ENCODE measurements at regions of chr3 and their contacts with region 1.

Region 1: DNA sequence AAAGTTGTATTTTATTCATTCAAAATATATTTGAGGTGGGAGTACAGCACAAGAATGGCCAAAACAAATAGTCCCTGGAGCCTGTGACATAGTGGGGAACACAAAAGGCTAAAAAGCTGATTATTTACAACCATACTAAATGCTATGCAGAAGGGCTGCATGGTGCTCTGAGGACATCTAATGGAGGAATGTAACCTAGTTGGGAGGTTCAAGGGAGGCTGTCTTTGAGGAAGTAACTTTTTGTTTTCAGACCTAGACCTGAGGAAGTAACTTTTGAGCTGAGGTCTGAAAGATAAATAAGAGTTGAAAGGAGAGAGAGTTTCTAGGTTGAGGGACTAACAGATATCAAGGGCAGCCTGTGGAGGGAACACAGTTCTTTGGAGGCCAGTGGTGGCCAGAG is 34.8 kb upstream of the RASA2 start:
- DNase-seq: no peak
- ATAC-seq: peak in 3 of 4 donors; percentile 41 to 69 (median 53)
- H3K4me3 ChIP-seq: no peak overlapping the region
- H3K27ac ChIP-seq: no peak overlapping the region
- H3K4me1 ChIP-seq: no peaks in the 10 kb centered on the region
- H3K27me3 ChIP-seq: no peaks in the 10 kb centered on the region
- CTCF ChIP-seq: peak; percentile 56

Region 2: DNA sequence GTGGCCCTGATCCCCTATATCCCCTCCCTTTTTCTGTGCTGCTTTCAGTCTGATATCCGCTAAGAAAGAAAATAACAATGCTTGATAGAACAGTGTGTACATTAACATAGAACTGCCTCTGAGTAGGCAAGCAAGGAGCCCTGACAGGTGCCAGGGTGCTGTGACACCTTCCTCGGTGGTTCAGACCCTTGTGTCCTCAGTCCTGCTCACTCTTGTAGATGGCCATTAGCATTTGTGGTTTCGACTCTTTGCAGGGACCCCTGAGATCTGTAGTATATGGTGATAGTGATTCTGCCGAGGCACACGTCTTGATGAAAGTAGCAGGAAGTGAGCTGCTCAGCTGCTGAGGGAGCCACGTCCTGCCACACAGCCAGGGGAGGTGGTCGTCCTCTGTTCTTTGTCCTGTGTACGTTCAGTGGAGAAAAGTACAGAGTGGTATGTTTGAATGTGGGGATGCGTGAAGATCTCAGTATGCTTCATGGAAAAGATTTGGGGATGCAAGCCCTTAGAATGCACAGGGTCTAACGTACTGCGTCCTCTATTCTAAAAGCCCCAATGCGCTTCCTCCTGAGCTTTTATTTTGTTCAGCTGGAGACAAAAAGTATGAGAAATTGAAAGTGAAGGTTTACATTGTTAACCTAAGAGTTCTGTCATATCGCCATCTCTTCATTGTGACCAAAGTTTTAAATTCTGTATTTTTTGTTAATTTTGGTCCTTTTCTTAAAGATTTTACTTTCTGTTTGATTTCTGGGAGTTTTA is 185.1 kb before region 1 on chr3:
- intact Hi-C with region 1: no loop called
- DNase-seq: no peak
- ATAC-seq: no peak
- H3K4me3 ChIP-seq: peak overlapping the region; percentile 18
- H3K27ac ChIP-seq: no peak overlapping the region
- H3K4me1 ChIP-seq: peaks cover 2% of the 10 kb centered on the region
- H3K27me3 ChIP-seq: no peaks in the 10 kb centered on the region
- CTCF ChIP-seq: no peak

Region 3: GRCh38 chr3:141303481-141304223 is 148.4 kb before region 1 on chr3:
- intact Hi-C with region 1: loop called in 1 of 2 experiments (anchors 2 kb)
- DNase-seq: no peak
- ATAC-seq: peak; percentile 71 to 90 (median 76)
- H3K4me3 ChIP-seq: no peak overlapping the region
- H3K27ac ChIP-seq: no peak overlapping the region
- H3K4me1 ChIP-seq: no peaks in the 10 kb centered on the region
- H3K27me3 ChIP-seq: no peaks in the 10 kb centered on the region
- CTCF ChIP-seq: peak; percentile 81

Region 4: DNA sequence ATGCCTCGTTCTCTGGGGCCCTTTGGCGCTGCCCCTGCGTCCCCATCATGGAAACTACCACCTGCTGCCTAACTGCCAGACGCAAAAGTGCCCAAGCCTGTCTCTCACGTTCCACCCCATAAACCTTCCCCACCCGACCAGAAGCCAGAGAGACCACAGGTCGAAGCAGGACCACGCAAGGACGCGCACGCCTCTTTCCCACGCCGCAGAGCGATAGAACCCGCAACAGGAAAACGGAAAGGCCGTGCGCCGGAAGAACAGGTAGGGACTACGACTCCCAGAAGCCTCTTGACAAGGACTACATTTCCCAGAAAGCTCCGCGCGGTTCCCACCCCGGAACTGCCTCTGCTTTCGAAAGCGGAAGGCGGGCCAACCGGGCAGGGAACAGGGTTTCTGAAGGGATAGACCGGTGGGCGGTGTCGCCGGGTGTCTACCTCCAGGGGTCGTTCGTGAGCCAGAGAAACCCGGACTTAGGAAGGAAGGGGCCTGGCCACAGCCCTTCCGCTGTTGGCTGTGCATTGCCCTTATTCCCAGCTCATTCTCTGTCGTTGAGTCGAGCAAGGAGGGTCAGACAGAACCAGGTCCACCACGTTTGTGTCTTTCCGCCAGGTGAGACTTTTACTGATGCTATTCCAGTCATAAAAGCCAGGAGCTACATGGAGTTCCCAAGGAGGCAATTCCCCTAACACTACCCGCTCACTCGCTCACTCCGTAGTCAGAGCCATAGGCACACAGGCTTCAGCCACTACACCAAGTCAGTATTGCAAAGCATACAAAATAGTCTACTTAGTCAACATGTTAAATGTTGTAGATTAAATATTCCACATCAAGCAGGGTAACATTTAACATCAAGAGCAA is 140.3 kb before region 1 on chr3:
- intact Hi-C with region 1: loop called (anchors 2 to 5 kb)
- DNase-seq: peak; percentile 98 to 99
- ATAC-seq: peak; percentile 97 to 100 (median 98)
- H3K4me3 ChIP-seq: peak overlapping the region; percentile 88
- H3K27ac ChIP-seq: peak overlapping the region; percentile 86
- H3K4me1 ChIP-seq: no peaks in the 10 kb centered on the region
- H3K27me3 ChIP-seq: no peaks in the 10 kb centered on the region
- CTCF ChIP-seq: peak; percentile 72

Region 5: GRCh38 chr3:141360888-141361598 is 91.0 kb before region 1 on chr3:
- intact Hi-C with region 1: loop called (anchors 1 to 2 kb)
- DNase-seq: no peak
- ATAC-seq: peak; percentile 73 to 93 (median 82)
- H3K4me3 ChIP-seq: peak overlapping the region; percentile 44
- H3K27ac ChIP-seq: peak overlapping the region; percentile 1
- H3K4me1 ChIP-seq: peaks cover 7% of the 10 kb centered on the region
- H3K27me3 ChIP-seq: no peaks in the 10 kb centered on the region
- CTCF ChIP-seq: peak; percentile 75

Region 6: DNA sequence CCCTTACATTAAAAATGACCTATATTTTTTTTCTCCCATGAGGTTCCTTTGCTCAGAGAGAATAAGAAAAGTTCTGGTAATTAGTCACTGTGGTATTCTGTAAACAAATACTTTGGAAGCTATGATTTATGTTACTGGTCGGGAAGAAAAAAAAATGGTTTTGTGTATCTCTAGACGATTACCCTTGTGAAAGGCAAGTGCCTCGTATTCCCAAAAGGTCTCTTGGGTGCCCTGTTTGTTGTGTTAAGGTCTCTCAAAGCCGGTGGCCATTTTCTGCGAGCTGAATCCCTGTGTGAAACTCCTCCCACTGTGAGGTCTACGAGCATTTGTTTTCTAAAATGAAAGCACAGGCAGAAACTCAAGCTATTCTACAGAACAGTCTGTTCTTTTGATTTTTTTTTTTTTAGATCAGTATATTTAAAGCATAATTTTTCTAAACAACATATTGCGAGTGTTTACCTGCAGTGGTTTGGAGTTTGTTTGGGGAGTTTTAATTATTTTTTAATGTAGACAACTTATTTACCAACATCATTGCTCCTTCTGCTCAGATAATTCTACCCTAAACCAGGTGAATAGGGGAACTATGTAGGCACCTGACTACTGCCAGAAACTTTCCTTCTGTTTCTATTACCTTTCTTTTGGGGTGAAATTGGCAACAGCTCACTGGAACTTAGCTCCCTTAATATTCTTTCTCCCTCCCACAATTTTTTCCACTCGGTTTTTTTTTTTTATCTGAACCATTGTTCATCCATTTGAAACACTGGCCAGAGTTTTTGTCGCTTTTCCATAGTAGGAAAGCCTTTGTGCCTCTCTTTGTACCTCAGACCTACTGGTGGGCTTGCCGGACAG is 39.7 kb before region 1 on chr3:
- intact Hi-C with region 1: no loop called
- DNase-seq: peak in 1 of 2 donors; percentile 69
- ATAC-seq: peak; percentile 43 to 78 (median 63)
- H3K4me3 ChIP-seq: peak overlapping the region; percentile 64
- H3K27ac ChIP-seq: peak overlapping the region; percentile 96
- H3K4me1 ChIP-seq: peaks cover 53% of the 10 kb centered on the region
- H3K27me3 ChIP-seq: no peaks in the 10 kb centered on the region
- CTCF ChIP-seq: no peak

Measured in psoas muscle (tissue), 8 donors.